ENCODE measurements at regions of chr9 and their contacts with region 1.

Region 1: DNA sequence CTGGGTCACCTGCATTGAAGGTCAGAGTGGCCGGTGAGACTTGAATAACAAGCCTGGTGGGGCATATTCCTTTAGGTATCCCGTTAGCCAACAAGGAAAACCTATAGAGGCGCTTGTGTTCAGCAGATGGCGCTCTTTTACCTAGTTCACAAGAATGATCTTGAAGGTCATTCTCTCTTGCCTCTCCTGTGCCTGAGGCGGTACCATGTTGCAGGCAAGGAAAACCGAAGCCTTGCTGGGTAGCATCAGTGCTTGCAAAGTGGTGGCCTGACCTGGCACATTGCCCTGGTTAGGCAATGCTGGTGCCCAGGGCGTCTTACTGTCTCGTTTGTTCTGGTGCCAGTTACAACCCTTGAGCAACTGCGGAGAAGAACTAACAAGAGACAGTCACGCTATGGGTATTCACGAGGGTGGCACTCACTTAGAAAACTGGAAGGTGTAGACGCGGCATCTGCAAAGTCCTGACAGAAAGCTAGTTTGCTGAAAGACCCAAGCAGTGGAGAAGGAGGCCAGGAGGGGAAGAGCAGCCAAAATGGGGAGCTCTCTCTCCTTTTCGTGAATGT is 56.7 kb downstream of the AOPEP start:
- DNase-seq: peak; percentile 53
- H3K4me3 Mint-ChIP-seq: no peak overlapping the region
- H3K27ac Mint-ChIP-seq: no peak overlapping the region
- H3K4me1 Mint-ChIP-seq: peaks cover 14% of the 10 kb centered on the region
- H3K27me3 Mint-ChIP-seq: no peaks in the 10 kb centered on the region

Region 2: GRCh38 chr9:94757158-94757557 is 26.0 kb before region 1 on chr9:
- CTCF ChIA-PET with region 1: no interaction called
- POLR2A ChIA-PET with region 1: no interaction called
- intact Hi-C with region 1: no loop called
- DNase-seq: no peak
- H3K4me3 Mint-ChIP-seq: no peak overlapping the region
- H3K27ac Mint-ChIP-seq: no peak overlapping the region
- H3K4me1 Mint-ChIP-seq: peaks cover 6% of the 10 kb centered on the region
- H3K27me3 Mint-ChIP-seq: no peaks in the 10 kb centered on the region

Region 3: GRCh38 chr9:94860968-94861871 is 78.0 kb after region 1 on chr9:
- CTCF ChIA-PET with region 1: no interaction called
- POLR2A ChIA-PET with region 1: interaction called, 3 read pairs
- intact Hi-C with region 1: loop called (anchors 5 kb)
- DNase-seq: peak; percentile 79
- H3K4me3 Mint-ChIP-seq: peak overlapping the region; percentile 25
- H3K27ac Mint-ChIP-seq: peak overlapping the region; percentile 76
- H3K4me1 Mint-ChIP-seq: peaks cover 44% of the 10 kb centered on the region
- H3K27me3 Mint-ChIP-seq: no peaks in the 10 kb centered on the region

Region 4: GRCh38 chr9:95565982-95566381 is 782.8 kb after region 1 on chr9:
- CTCF ChIA-PET with region 1: no interaction called
- POLR2A ChIA-PET with region 1: no interaction called
- intact Hi-C with region 1: no loop called
- DNase-seq: no peak
- H3K4me3 Mint-ChIP-seq: no peak overlapping the region
- H3K27ac Mint-ChIP-seq: no peak overlapping the region
- H3K4me1 Mint-ChIP-seq: peaks cover 6% of the 10 kb centered on the region
- H3K27me3 Mint-ChIP-seq: peaks cover 26% of the 10 kb centered on the region

Measured in activated CD4-positive, alpha-beta memory T cell treated with anti-CD3 and anti-CD28 coated beads for 36 hours (primary cell).